Ascending aorta (tissue), 2 donors: ENCODE measurements at regions of chr11 and their contacts with region 1.

Region 1: GRCh38 chr11:61871158-61871597 is 20.2 kb downstream of the FADS3 start:
- DNase-seq: peak in 1 of 2 donors; percentile 90
- H3K4me3 ChIP-seq: peak overlapping the region in 1 of 2 donors; percentile 8
- H3K27ac ChIP-seq: peak overlapping the region; percentile 70 to 74
- H3K4me1 ChIP-seq: peaks cover 0 to 13% of the 10 kb centered on the region in 2 donors
- H3K27me3 ChIP-seq: no peaks in the 10 kb centered on the region
- CTCF ChIP-seq: peak; percentile 94 to 98 (median 97)

Region 2: GRCh38 chr11:61891331-61892084 is 20.3 kb after region 1 on chr11 and contains the start of gene FADS3:
- intact Hi-C with region 1: loop called (anchors 1 kb)
- DNase-seq: peak; percentile 80 to 96
- H3K4me3 ChIP-seq: peak within 1 kb of the TSS; percentile 99
- H3K27ac ChIP-seq: peak within 1 kb of the TSS; percentile 90 to 98
- H3K4me1 ChIP-seq: peaks cover 22 to 30% of the 10 kb centered on the region in 2 donors
- H3K27me3 ChIP-seq: no peaks in the 10 kb centered on the region
- CTCF ChIP-seq: no peak
- total RNA-seq, gene FADS3: 191 TPM

Region 3: DNA sequence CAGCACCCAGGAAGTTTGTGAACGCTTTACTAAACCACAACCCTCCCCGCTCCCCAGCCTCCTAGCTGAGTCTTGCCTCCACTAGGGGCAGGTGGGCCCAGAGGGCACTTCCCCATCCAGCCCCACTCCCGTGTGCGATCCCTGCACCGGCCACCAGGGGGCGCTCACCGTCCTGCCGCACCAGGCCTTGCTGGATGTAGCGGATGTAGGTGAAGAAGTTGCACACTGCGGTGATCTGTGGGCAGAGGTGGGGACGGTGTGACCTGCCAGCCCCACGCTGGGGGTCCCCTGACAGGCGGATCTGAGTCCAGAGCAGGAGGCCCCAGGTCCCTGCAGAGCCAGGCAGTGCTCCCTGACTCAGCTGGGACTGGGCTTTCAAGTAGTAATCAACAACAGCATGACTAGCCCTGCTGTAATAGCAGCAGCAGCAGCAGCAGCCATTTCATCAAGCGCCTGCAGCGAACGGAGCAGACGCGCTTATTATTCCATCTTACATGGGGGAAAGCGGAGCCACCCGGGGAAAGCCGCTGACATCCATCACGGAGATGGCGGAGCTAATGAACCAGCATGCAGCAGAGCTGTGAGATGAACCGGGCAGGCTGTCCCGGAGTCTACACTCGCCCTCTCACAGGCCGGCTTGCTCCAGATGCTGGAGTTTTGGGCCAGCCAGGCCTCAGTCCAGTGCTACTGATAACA is 28.1 kb after region 1 on chr11:
- intact Hi-C with region 1: loop called (anchors 1 kb)
- DNase-seq: peak in 1 of 2 donors; percentile 91
- H3K4me3 ChIP-seq: no peak overlapping the region
- H3K27ac ChIP-seq: peak overlapping the region in 1 of 2 donors; percentile 30
- H3K4me1 ChIP-seq: no peaks in the 10 kb centered on the region
- H3K27me3 ChIP-seq: no peaks in the 10 kb centered on the region
- CTCF ChIP-seq: peak; percentile 99 to 100 (median 99)

Region 4: DNA sequence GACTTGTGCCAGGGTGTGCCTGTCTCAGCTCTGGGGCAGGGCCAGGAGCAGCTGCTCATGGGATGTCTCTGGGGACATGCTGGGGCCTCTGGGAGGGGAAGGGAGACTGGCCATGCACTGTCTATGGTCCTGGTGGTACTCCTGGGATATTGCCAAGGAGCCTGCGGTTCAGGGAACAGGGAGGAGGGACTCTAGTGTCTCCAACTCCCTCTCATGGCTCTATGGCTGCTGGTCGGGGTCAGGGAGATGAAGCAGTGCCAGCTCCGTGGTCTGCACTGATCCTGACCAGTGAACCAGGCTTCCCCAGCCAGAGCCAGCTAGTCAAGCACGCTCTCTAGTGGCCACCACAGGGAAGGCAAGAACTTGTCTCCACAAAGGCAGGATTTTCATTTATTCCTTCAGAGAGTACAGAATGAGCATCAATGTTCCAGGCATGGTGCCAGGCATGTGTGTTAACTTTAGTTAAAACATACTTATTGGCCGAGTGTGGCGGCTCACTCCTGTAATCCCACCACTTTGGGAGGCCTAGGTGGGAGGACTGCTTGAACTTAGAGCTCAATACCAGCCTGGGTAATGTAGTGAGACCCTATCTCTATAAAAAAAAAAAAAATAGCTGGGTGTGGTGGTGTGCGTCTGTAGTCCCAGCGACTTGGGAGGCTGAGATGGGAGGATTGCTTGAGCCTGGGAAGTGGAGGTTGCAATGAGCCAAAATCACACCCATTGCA is 76.5 kb after region 1 on chr11:
- intact Hi-C with region 1: loop called (anchors 1 kb)
- DNase-seq: peak; percentile 69 to 96
- H3K4me3 ChIP-seq: no peak overlapping the region
- H3K27ac ChIP-seq: peak overlapping the region in 1 of 2 donors; percentile 39
- H3K4me1 ChIP-seq: peaks cover 3 to 11% of the 10 kb centered on the region in 2 donors
- H3K27me3 ChIP-seq: no peaks in the 10 kb centered on the region
- CTCF ChIP-seq: peak; percentile 91 to 94 (median 94)

Region 5: GRCh38 chr11:62081378-62082291 is 210.5 kb after region 1 on chr11:
- intact Hi-C with region 1: loop called (anchors 1 kb)
- DNase-seq: peak; percentile 21 to 89
- H3K4me3 ChIP-seq: peak overlapping the region in 1 of 2 donors; percentile 5
- H3K27ac ChIP-seq: no peak overlapping the region
- H3K4me1 ChIP-seq: no peaks in the 10 kb centered on the region
- H3K27me3 ChIP-seq: no peaks in the 10 kb centered on the region
- CTCF ChIP-seq: peak; percentile 90 to 94 (median 93)